Testis (tissue), 5 donors: ENCODE measurements at regions of chr11 and their contacts with region 1.

Region 1: DNA sequence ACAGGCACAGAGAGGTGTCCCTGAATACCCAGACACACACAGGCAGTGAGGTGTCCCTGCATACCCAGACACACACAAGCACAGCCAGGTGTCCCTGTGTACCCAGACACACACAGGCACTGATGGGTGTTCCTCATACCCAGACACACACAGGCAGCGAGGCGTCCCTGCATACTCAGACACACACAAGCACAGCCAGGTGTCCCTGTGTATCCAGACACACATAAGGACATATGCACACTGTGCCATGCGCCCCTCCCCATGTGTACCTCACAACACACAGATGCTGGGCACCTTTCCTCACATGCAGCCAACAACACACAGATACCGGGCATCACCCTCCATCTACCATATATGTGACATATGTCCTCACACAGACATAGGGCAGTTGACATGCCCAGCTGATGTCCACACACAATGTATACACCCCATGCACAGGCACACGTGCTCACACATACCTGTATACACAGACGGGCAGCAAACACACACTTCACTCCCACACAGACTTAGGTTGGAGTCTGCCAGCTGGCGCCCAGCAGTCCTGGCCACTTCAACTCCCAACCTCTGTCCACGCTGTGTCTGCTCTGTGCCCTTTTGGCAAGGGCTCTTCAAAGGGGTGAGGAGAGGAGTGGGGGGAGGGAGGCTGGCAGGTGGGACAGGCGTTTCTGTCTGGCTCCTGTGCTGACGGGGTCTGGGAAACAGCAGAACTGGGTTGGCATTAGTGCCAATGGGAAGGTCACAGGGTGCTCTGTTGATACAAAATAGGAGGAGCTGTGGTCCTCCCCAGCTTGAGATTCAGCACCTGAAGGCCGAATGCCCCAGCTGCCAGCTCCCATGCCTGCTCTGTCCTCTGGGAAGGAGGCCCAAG is 69.4 kb upstream of the ALX4 start:
- DNase-seq: no peak
- H3K4me3 ChIP-seq: no peak overlapping the region
- H3K27ac ChIP-seq: no peak overlapping the region
- H3K4me1 ChIP-seq: no peaks in the 10 kb centered on the region
- H3K27me3 ChIP-seq: no peaks in the 10 kb centered on the region
- CTCF ChIP-seq: no peak
- POLR2A ChIP-seq: no peak

Region 2: DNA sequence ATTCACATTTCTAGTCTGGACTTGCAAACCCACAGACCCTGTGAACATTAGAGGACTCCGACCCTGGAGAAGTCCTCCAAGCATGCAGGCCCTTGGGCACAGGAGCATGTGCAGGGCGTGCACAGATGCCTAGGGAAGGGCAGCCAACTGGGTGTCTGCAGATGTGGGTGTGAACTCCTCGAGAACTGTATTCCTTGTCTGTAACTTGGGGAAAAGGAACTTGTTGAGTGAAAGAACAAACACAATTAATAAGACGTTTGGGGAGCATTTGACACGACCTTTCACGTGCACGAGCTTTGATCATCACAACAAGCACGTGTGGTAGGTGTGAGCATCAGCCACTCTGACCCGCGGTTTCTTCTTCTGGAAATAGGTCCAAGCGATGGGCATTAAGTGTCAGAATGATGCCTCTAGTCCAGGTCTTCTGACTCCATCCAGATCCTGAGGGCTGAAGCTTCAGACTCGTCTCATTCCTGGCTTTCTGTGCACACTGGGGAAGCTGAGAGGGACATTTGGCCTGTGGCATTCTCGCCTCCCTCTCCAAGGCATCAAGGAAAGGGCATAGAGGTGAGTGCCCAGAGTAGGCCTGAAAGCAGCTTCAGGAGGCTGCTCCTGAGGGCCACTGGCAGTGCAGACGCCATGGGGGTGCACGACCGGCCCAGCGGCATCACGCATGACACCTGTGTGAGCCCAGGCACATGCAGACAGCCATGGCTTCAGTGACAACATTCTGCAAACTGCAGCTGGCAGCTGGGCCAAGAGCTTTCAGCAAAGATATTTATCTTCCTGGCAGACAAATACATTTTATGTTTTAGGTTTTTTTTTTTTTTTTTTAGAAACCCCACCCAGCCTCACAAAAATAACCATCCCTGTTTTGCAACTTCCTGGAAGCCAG is 101.9 kb before region 1 on chr11:
- intact Hi-C with region 1: no loop called
- DNase-seq: no peak
- H3K4me3 ChIP-seq: no peak overlapping the region
- H3K27ac ChIP-seq: no peak overlapping the region
- H3K4me1 ChIP-seq: no peaks in the 10 kb centered on the region
- H3K27me3 ChIP-seq: no peaks in the 10 kb centered on the region
- CTCF ChIP-seq: no peak
- POLR2A ChIP-seq: no peak

Region 3: GRCh38 chr11:44309483-44310205 is 69.7 kb before region 1 on chr11 and contains the start of gene ALX4:
- intact Hi-C with region 1: loop called (anchors 10 kb)
- DNase-seq: peak; percentile 48
- H3K4me3 ChIP-seq: peak within 1 kb of the TSS; percentile 31 to 54
- H3K27ac ChIP-seq: no peak within 1 kb of the TSS
- H3K4me1 ChIP-seq: peaks cover 4% of the 10 kb centered on the region
- H3K27me3 ChIP-seq: no peaks in the 10 kb centered on the region
- CTCF ChIP-seq: no peak
- POLR2A ChIP-seq: no peak
- total RNA-seq, gene ALX4: 0.56 to 1.0 TPM